ENCODE measurements at regions of chr11 and their contacts with region 1.

Region 1: DNA sequence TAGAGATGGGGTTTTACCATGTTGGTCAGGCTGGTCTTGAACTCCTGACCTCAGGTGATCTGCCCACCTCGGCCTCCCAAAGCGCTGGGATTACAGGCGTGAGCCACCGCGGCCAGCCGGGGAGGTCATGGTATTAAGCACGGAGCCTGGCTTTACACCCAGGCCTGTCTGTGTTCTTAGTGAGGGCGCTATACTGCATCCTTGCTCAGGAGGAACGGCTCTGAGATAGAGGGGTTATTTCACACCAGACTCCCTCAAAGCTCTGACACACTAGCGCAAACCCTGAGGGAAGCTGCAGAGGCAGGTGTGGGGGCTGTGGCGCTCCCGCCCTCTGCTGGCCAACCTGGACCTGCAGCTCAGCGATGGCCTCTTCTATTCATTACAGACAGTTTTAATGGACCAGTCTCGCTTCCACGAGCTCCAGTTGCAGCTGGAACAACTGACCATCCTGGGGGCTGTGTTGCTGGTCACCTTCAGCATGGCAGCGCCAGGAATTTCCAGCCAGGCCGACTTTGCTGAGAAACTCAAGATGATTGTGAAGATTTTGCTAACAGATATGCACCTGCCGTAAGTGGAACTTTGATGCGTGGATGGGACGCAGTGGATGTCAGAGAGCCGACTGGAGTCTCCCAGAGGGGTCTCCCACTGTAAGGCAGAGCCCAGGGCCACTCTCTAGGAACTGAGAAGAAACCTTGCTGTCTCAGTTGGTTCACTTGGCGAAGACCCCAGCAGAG is 26.2 kb downstream of the TCP11L1 start:
- DNase-seq: peak; percentile 70
- H3K4me3 Mint-ChIP-seq: no peak overlapping the region
- H3K27ac Mint-ChIP-seq: no peak overlapping the region
- H3K4me1 Mint-ChIP-seq: peaks cover 32% of the 10 kb centered on the region
- H3K27me3 Mint-ChIP-seq: no peaks in the 10 kb centered on the region
- CTCF ChIP-seq: peak; percentile 85

Region 2: GRCh38 chr11:32809313-32809712 is 256.3 kb before region 1 on chr11:
- CTCF ChIA-PET with region 1: interaction called, 16 read pairs
- POLR2A ChIA-PET with region 1: no interaction called
- intact Hi-C with region 1: loop called (anchors 1 kb)
- DNase-seq: peak; percentile 82
- H3K4me3 Mint-ChIP-seq: no peak overlapping the region
- H3K27ac Mint-ChIP-seq: no peak overlapping the region
- H3K4me1 Mint-ChIP-seq: no peaks in the 10 kb centered on the region
- H3K27me3 Mint-ChIP-seq: no peaks in the 10 kb centered on the region
- CTCF ChIP-seq: peak; percentile 83

Region 3: GRCh38 chr11:32960553-32961164 is 105.0 kb before region 1 on chr11:
- CTCF ChIA-PET with region 1: interaction called, 232 read pairs
- POLR2A ChIA-PET with region 1: interaction called, 8 read pairs
- intact Hi-C with region 1: loop called (anchors 1 kb)
- DNase-seq: peak; percentile 63
- H3K4me3 Mint-ChIP-seq: no peak overlapping the region
- H3K27ac Mint-ChIP-seq: no peak overlapping the region
- H3K4me1 Mint-ChIP-seq: no peaks in the 10 kb centered on the region
- H3K27me3 Mint-ChIP-seq: no peaks in the 10 kb centered on the region
- CTCF ChIP-seq: peak; percentile 54

Region 4: DNA sequence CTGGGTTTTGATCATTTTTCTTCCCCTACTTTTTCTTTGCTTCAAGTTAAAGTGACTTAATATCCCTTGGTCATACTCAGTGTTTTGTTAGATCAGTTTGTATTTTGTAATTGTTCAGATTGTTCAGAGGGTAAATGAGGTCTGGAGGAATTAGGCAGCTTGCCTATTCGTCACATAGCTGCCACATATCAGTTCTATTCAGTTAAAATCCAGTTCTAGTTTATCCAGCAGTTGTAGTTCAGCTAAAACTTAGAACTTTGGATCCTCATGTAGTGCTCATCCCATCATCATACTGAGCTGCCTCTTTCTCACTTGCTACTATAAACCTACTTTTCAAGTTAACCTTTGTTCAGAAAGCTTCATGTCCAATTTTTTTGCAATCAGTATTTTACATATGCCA is 97.1 kb before region 1 on chr11:
- CTCF ChIA-PET with region 1: interaction called, 232 read pairs
- POLR2A ChIA-PET with region 1: interaction called, 5 read pairs
- intact Hi-C with region 1: no loop called
- DNase-seq: no peak
- H3K4me3 Mint-ChIP-seq: no peak overlapping the region
- H3K27ac Mint-ChIP-seq: peak overlapping the region; percentile 14
- H3K4me1 Mint-ChIP-seq: no peaks in the 10 kb centered on the region
- H3K27me3 Mint-ChIP-seq: no peaks in the 10 kb centered on the region
- CTCF ChIP-seq: no peak

Region 5: DNA sequence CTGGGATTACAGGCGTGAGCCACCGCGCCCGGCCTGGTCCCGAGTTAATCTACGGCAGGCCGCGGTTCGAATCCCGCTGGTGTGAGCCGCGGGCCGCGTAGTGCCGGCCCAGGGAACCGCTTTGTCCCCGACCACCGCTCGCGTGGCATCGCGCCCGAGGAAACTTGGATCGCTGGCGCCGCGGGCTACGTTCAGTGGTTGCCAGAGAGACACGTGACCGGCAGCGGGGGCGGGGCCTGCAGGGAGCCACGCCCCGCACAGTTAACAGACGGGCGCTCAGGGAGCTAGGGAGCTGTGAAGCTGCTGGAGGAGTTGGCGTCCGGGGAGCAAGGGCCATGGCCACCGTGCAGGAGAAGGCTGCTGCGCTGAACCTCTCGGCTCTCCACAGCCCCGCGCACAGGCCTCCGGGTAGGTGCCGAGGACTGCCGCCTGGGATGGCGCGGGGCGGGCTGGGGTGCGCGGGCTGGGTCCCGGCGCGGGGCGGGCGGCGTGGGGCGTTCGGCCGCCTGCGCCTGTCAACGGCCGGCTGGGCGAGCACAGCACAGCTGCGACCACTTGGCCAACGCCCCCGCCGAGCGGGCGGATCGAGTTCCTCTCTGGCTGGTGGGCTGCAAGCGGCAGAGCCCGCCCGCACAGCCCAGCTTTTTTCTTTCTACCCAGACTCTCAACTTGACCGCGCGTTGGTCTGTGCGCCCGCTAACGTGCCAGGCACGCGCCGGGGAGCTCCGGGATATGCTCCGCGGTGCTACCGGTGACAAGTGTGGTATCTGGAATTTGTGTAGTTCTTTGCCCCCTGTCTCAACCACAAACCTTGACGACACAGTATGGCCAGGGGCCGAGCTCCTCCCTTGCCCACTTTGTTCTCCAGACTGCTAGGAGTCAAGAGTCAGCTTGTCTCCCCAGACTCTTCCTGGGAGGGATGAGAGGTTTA is 49.7 kb before region 1 on chr11 and contains the start of gene DEPDC7:
- CTCF ChIA-PET with region 1: interaction called, 3 read pairs
- POLR2A ChIA-PET with region 1: interaction called, 6 read pairs
- intact Hi-C with region 1: loop called (anchors 10 kb)
- DNase-seq: peak; percentile 72
- H3K4me3 Mint-ChIP-seq: peak within 1 kb of the TSS; percentile 78
- H3K27ac Mint-ChIP-seq: peak within 1 kb of the TSS; percentile 24
- H3K4me1 Mint-ChIP-seq: no peaks in the 10 kb centered on the region
- H3K27me3 Mint-ChIP-seq: no peaks in the 10 kb centered on the region
- CTCF ChIP-seq: no peak
- total RNA-seq, gene DEPDC7: 2.2 and 3.6 TPM in 2 replicates

Region 6: GRCh38 chr11:33039274-33040032 is 26.2 kb before region 1 on chr11 and contains the start of gene TCP11L1:
- CTCF ChIA-PET with region 1: interaction called, 103 read pairs
- POLR2A ChIA-PET with region 1: interaction called, 99 read pairs
- intact Hi-C with region 1: loop called (anchors 2 kb)
- DNase-seq: peak; percentile 68
- H3K4me3 Mint-ChIP-seq: peak within 1 kb of the TSS; percentile 85
- H3K27ac Mint-ChIP-seq: peak within 1 kb of the TSS; percentile 97
- H3K4me1 Mint-ChIP-seq: peaks cover 16% of the 10 kb centered on the region
- H3K27me3 Mint-ChIP-seq: no peaks in the 10 kb centered on the region
- CTCF ChIP-seq: no peak
- total RNA-seq, gene TCP11L1: 25.8 and 26.9 TPM in 2 replicates

Region 7: GRCh38 chr11:33045551-33046255 is 19.9 kb before region 1 on chr11:
- CTCF ChIA-PET with region 1: interaction called, 103 read pairs
- POLR2A ChIA-PET with region 1: interaction called, 99 read pairs
- intact Hi-C with region 1: loop called (anchors 2 kb)
- DNase-seq: peak; percentile 81
- H3K4me3 Mint-ChIP-seq: no peak overlapping the region
- H3K27ac Mint-ChIP-seq: peak overlapping the region; percentile 76
- H3K4me1 Mint-ChIP-seq: peaks cover 38% of the 10 kb centered on the region
- H3K27me3 Mint-ChIP-seq: no peaks in the 10 kb centered on the region
- CTCF ChIP-seq: no peak